ENCODE measurements at regions of chr6 and their contacts with region 1.

Region 1: DNA sequence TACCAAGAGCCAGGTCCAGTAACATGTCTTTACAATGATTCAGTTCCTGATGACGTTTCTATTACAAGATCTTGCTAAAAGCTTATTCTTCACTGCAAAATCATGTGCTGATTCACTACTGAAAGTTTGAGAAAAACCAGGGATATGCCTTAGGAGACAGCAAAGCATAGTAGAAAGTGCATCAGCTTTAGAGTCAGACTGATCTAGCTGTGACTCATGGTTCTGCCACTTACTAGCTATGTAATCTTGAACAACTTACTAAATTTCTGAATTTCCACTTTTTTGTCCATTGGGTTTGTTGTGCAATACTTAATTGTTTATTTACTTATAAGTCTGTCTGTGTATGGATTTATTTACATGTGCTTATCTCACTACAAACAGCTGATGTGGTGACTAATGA is 198.5 kb upstream of the RSPO3 start:
- DNase-seq: peak; percentile 6
- H3K4me3 ChIP-seq: no peak overlapping the region
- H3K27ac ChIP-seq: no peak overlapping the region
- H3K4me1 ChIP-seq: peaks cover 10% of the 10 kb centered on the region
- H3K27me3 ChIP-seq: no peaks in the 10 kb centered on the region
- CTCF ChIP-seq: no peak

Region 2: GRCh38 chr6:126888727-126889725 is 30.9 kb before region 1 on chr6:
- CTCF ChIA-PET with region 1: no interaction called
- POLR2A ChIA-PET with region 1: interaction called, 10 read pairs
- intact Hi-C with region 1: no loop called
- DNase-seq: peak; percentile 76
- H3K4me3 ChIP-seq: no peak overlapping the region
- H3K27ac ChIP-seq: peak overlapping the region; percentile 81
- H3K4me1 ChIP-seq: peaks cover 51% of the 10 kb centered on the region
- H3K27me3 ChIP-seq: no peaks in the 10 kb centered on the region
- CTCF ChIP-seq: no peak